Esophagus muscularis mucosa (tissue), 4 donors: ENCODE measurements at regions of chr2 and their contacts with region 1.

Region 1: DNA sequence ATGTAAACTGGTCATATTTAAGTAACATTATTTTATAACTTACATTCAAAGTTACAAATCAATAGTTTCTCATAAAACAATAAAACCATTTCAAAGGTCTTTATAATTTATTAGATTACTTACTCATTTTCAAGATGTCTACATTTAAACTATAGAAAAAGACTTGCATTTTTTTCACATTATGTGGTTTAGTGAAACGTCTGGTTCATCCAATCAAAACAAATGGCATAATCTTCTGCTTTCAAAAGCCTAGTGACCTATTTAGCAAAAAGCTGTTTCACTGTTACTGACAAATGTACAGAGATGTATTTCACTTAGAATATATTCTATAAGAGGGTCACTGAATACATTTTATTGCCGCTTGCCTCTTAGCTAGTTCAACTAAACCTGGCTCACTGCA is 49.3 kb upstream of the MCM6 start:
- DNase-seq: no peak
- H3K4me3 ChIP-seq: no peak overlapping the region
- H3K27ac ChIP-seq: no peak overlapping the region
- H3K4me1 ChIP-seq: no peaks in the 10 kb centered on the region
- H3K27me3 ChIP-seq: no peaks in the 10 kb centered on the region
- CTCF ChIP-seq: no peak
- EP300 ChIP-seq: no peak
- POLR2A ChIP-seq: no peak

Region 2: DNA sequence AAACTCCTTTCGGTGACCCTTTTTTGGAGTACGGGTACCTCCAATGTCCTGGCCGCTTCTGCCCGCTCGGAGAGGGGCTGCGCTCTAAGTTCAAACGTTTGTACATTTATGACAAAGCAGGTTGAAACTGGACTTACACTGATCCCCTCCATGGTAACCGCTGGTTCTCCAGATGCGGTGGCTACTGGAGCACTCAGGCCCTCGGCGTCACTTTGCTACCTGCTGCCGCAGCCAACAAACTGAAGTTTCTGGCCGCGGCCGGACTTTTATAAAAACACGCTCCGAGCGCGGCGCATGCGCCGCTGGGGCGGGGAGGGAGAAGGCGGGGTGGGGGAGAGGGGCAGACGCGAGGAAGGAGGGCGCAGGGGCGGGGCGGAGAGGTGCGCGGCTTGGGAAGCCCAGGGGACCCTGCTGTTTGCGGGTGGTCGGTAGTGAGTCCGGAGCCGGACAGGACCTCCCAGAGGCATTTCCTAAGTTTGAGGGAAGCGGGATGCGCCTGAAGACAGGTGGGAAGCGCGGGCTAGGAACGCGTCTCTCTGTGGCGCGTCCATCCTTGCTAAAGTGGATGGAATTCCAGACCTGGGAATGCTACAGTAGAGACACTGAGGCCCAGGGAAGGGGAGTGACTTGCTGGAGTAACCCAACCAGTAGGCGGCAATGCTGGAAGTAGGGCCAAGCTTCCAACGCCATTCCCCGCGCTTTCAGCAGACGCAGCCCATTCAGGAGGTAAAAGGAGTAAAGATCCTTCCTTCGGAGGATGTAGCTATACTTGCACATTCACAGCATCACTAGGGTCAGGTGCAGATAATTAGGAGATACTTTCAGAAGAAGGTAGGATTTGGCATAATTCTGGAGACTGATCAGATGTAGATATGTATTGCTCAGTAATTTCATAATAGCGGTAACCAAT is 192.6 kb after region 1 on chr2 and contains the start of gene CXCR4:
- intact Hi-C with region 1: loop called (anchors 10 kb)
- DNase-seq: peak; percentile 93
- H3K4me3 ChIP-seq: peak within 1 kb of the TSS; percentile 53 to 64 (median 58)
- H3K27ac ChIP-seq: peak within 1 kb of the TSS; percentile 48 to 61 (median 52)
- H3K4me1 ChIP-seq: peaks cover 19 to 50% (median 47%) of the 10 kb centered on the region in 4 donors
- H3K27me3 ChIP-seq: peaks cover 0 to 59% (median 2%) of the 10 kb centered on the region in 4 donors
- CTCF ChIP-seq: no peak
- EP300 ChIP-seq: no peak
- POLR2A ChIP-seq: no peak
- total RNA-seq, gene CXCR4: 4.2 to 11.8 (median 5.6) TPM